ENCODE measurements at regions of chr17 and their contacts with region 1.

Region 1: DNA sequence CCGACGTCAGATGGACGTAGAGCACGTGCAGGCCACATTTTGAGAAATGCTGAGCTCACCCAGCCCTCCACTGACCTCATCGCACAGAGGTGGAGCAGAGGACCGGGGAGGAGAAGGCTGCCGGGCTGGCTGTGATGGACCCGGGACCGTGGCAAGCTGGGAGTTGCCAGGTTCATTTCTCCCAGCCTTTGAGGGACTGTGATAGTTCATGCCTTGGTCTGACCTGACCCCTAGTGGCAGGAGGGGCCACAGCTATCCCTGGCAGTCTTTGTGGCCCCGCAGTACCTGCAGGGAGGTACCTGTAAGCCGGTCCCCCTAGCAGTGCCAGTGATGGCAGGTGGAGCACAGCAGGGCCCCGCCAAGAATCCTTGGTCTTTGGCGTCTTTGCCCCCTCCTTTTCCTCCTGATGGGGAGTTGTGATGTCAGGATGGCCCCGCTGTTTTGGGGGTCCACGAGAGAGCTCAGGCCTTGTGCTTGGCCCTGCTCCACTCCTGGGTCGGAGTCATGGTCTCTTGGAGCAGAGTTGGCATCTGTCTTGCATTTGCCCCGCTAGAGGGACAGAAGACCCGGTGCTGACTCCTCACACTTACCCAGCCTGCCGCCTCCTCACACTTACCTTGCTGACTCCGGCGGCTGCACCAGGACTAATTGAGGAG is 50.4 kb downstream of the OR1D5 start:
- DNase-seq: peak; percentile 69 to 78
- H3K4me3 ChIP-seq: no peak overlapping the region
- H3K4me3 Mint-ChIP-seq: no peak overlapping the region
- H3K27ac Mint-ChIP-seq: no peak overlapping the region
- H3K4me1 ChIP-seq: no peaks in the 10 kb centered on the region
- H3K4me1 Mint-ChIP-seq: no peaks in the 10 kb centered on the region
- H3K27me3 ChIP-seq: no peaks in the 10 kb centered on the region
- H3K27me3 Mint-ChIP-seq: no peaks in the 10 kb centered on the region
- CTCF ChIP-seq: peak; percentile 81 to 90

Region 2: GRCh38 chr17:2786176-2786881 is 226.7 kb before region 1 on chr17:
- CTCF ChIA-PET with region 1: interaction called, 12 read pairs
- POLR2A ChIA-PET with region 1: no interaction called
- intact Hi-C with region 1: loop called (anchors 1 kb)
- DNase-seq: peak; percentile 95 to 98
- H3K4me3 ChIP-seq: no peak overlapping the region
- H3K4me3 Mint-ChIP-seq: no peak overlapping the region
- H3K27ac Mint-ChIP-seq: no peak overlapping the region
- H3K4me1 ChIP-seq: peaks cover 4% of the 10 kb centered on the region; the same call in 1 of the 2 replicates
- H3K4me1 Mint-ChIP-seq: peaks cover 6% of the 10 kb centered on the region
- H3K27me3 ChIP-seq: no peaks in the 10 kb centered on the region
- H3K27me3 Mint-ChIP-seq: no peaks in the 10 kb centered on the region
- CTCF ChIP-seq: peak; percentile 94 to 96

Region 3: GRCh38 chr17:2847381-2848333 is 165.4 kb before region 1 on chr17:
- CTCF ChIA-PET with region 1: interaction called, 26 read pairs
- POLR2A ChIA-PET with region 1: no interaction called
- intact Hi-C with region 1: loop called (anchors 1 kb)
- DNase-seq: no peak
- H3K4me3 ChIP-seq: no peak overlapping the region
- H3K4me3 Mint-ChIP-seq: no peak overlapping the region
- H3K27ac Mint-ChIP-seq: no peak overlapping the region
- H3K4me1 ChIP-seq: peaks cover 9% of the 10 kb centered on the region
- H3K4me1 Mint-ChIP-seq: peaks cover 18% of the 10 kb centered on the region
- H3K27me3 ChIP-seq: no peaks in the 10 kb centered on the region
- H3K27me3 Mint-ChIP-seq: no peaks in the 10 kb centered on the region
- CTCF ChIP-seq: no peak

Region 4: GRCh38 chr17:2853111-2853721 is 159.8 kb before region 1 on chr17:
- CTCF ChIA-PET with region 1: interaction called, 26 read pairs
- POLR2A ChIA-PET with region 1: no interaction called
- intact Hi-C with region 1: loop called (anchors 1 kb)
- DNase-seq: peak in 1 of 2 experiments; percentile 55
- H3K4me3 ChIP-seq: peak overlapping the region; percentile 81
- H3K4me3 Mint-ChIP-seq: peak overlapping the region; percentile 89
- H3K27ac Mint-ChIP-seq: no peak overlapping the region
- H3K4me1 ChIP-seq: peaks cover 30% of the 10 kb centered on the region
- H3K4me1 Mint-ChIP-seq: peaks cover 7% of the 10 kb centered on the region
- H3K27me3 ChIP-seq: no peaks in the 10 kb centered on the region
- H3K27me3 Mint-ChIP-seq: no peaks in the 10 kb centered on the region
- CTCF ChIP-seq: no peak

Region 5: DNA sequence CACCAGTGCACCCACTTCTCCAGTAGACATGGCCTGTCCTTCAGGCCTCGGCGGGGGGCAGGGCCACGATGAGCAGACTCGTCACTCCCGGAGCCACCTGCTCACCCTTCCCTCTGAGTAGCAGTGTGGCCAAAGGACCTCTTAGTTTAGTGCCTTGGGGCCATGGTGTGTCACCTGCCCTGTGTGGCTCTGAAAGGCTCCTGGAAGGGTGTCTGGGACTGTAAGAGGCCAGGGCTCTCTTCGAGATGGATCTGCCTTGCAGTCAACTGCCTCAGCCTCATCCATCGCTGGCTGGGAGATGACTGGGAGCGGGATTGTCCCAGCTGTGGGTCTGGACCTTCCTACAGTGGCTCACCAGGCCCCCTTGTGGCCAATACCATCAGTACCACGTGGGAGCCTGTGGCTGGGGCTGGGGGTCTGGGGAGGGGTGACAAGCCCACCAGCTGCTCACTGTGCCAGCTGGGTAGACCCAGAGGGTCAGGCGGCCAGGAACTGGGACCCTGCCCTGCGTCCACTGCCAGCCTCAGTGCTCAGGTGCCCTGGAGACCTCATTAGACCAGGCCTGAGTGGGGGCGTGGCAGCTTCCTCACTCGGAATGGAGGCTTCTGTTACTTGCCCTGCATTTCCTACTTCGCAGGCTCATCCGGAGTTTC is 83.0 kb before region 1 on chr17:
- CTCF ChIA-PET with region 1: interaction called, 10 read pairs
- POLR2A ChIA-PET with region 1: no interaction called
- intact Hi-C with region 1: loop called (anchors 2 kb)
- DNase-seq: peak; percentile 74 to 75
- H3K4me3 ChIP-seq: no peak overlapping the region
- H3K4me3 Mint-ChIP-seq: no peak overlapping the region
- H3K27ac Mint-ChIP-seq: no peak overlapping the region
- H3K4me1 ChIP-seq: peaks cover 11% of the 10 kb centered on the region; the same call in 1 of the 2 replicates
- H3K4me1 Mint-ChIP-seq: peaks cover 12% of the 10 kb centered on the region
- H3K27me3 ChIP-seq: no peaks in the 10 kb centered on the region
- H3K27me3 Mint-ChIP-seq: no peaks in the 10 kb centered on the region
- CTCF ChIP-seq: peak; percentile 89 to 93

Measured in Caco-2 (cell line).